Activated CD4-positive, alpha-beta memory T cell treated with anti-CD3 and anti-CD28 coated beads for 36 hours (primary cell): ENCODE measurements at regions of chr17 and their contacts with region 1.

Region 1: DNA sequence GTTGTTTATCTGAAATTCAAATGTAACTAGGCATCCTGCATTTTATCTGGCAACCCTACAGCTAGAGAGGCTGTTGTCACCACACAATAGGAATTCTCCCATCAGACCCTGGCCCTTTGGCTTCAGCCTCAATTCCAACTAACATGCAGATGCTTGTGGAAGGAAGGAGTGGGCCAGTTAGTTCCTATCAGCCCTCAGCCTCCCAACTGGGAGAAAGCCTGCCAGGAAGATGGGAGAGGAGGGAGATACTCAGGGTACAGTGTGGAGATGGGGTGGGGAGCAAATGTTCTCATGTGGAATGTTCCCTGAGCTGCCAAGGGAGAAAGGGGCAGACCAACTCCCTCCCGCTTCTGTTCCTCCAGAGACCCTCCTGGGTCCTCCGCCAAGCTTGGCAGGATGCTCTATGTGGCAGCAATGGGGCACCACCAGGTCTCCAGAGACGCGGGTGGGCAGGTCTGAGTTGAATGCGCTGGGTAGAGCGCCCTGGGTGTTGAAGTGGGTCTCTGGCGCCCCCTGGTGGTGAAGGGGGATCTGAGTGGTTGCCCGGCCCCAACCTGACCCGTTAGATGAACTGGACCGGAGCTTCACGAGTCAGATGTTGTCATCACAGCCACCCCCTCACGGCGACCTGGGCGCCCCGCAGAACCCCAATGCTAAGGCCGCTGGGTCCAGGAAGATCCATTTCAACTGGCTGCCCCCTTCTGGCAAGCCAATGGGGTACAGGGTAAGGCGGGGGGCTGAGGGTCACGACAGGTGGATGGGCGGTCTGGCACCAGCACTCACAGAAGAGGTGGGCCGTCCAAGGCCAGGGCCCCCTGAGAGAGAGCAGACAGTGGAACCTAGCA is 15.2 kb downstream of the GALK1 start:
- DNase-seq: peak; percentile 91
- H3K4me3 Mint-ChIP-seq: peak overlapping the region; percentile 37
- H3K27ac Mint-ChIP-seq: no peak overlapping the region
- H3K4me1 Mint-ChIP-seq: peaks cover 21% of the 10 kb centered on the region
- H3K27me3 Mint-ChIP-seq: no peaks in the 10 kb centered on the region

Region 2: DNA sequence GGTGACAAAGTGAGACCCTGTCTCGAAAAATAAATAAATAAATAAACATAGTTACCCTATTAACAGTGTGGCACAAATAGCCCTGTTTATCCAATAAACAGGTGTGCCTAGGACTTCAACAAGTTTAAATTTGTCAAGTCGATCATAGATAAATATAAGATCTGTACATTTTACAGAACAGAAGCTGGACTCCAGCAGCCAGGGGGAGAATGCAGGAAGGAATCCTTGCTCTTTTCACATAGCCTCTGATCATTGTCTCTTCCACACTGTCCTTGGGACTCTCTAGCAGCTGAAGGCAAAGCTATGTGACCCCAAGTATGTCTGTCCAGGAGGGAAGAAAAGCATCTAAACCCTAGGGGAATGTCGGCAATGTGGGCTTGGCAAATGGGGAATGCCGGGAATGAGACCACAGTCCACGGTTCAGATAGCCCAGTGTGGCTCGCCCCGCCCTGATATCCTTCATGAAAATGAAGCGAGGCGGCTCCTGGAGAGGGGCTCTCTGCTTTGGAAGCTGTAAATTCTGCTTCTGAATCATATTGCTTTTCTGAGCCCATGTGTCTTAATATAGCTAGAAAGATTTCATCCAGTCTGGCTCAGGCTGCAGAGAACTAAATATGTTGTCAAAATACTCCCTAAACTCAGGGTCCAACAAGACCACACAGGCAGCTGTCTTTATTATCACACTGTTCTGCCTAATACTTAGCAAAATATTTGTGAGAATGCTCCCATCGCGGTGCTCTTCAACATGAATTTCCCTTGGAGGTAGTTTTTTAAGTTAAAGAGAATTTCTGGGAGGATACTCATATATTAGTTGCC is 319.4 kb before region 1 on chr17:
- CTCF ChIA-PET with region 1: interaction called, 5 read pairs
- POLR2A ChIA-PET with region 1: no interaction called
- intact Hi-C with region 1: loop called (anchors 5 kb)
- DNase-seq: no peak
- H3K4me3 Mint-ChIP-seq: no peak overlapping the region
- H3K27ac Mint-ChIP-seq: no peak overlapping the region
- H3K4me1 Mint-ChIP-seq: peaks cover 18% of the 10 kb centered on the region
- H3K27me3 Mint-ChIP-seq: no peaks in the 10 kb centered on the region

Region 3: DNA sequence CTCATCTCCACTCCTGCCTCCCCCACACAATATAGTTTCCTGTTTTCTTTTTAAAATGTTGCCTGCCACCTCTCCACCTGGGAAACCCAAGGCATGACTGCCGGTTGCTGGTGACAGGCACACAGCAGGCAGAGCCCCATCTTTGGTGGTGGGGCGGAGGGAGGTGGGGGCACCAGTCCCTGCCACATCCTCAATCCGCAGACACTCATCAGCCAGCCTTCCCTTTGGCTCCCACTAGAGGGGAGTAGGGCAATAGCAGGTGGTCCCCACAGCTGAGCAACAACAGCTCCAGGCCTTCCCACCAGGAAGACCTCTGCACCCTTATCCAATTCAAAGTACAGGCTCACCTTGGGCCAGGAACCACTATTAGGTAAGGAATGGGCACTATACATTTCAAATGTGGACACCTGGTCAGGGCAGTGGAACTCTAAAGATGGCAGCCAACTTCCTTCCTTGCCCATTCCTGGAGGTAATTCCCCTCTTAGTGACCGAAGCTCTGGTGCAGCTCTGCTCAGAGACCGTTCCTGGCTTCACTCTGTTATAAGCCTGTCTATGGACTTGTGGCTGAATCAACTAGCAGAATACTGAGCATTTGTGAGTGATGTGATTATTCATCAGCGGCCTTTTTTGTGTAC is 96.7 kb before region 1 on chr17:
- CTCF ChIA-PET with region 1: interaction called, 40 read pairs
- POLR2A ChIA-PET with region 1: no interaction called
- intact Hi-C with region 1: no loop called
- DNase-seq: peak; percentile 30
- H3K4me3 Mint-ChIP-seq: no peak overlapping the region
- H3K27ac Mint-ChIP-seq: no peak overlapping the region
- H3K4me1 Mint-ChIP-seq: no peaks in the 10 kb centered on the region
- H3K27me3 Mint-ChIP-seq: no peaks in the 10 kb centered on the region

Region 4: GRCh38 chr17:75679706-75680442 is 69.9 kb before region 1 on chr17:
- CTCF ChIA-PET with region 1: interaction called, 151 read pairs
- POLR2A ChIA-PET with region 1: interaction called, 4 read pairs
- intact Hi-C with region 1: loop called (anchors 1 kb)
- DNase-seq: no peak
- H3K4me3 Mint-ChIP-seq: no peak overlapping the region
- H3K27ac Mint-ChIP-seq: no peak overlapping the region
- H3K4me1 Mint-ChIP-seq: peaks cover 20% of the 10 kb centered on the region
- H3K27me3 Mint-ChIP-seq: no peaks in the 10 kb centered on the region

Region 5: GRCh38 chr17:75764711-75765421 is 15.1 kb after region 1 on chr17 and contains the start of gene GALK1:
- CTCF ChIA-PET with region 1: interaction called, 89 read pairs
- POLR2A ChIA-PET with region 1: interaction called, 18 read pairs
- intact Hi-C with region 1: no loop called
- DNase-seq: peak; percentile 83
- H3K4me3 Mint-ChIP-seq: peak within 1 kb of the TSS; percentile 79
- H3K27ac Mint-ChIP-seq: peak within 1 kb of the TSS; percentile 71
- H3K4me1 Mint-ChIP-seq: peaks cover 11% of the 10 kb centered on the region
- H3K27me3 Mint-ChIP-seq: no peaks in the 10 kb centered on the region
- total RNA-seq, gene GALK1: 69.3 to 69.7 TPM

Region 6: GRCh38 chr17:75827252-75828115 is 77.7 kb after region 1 on chr17:
- CTCF ChIA-PET with region 1: interaction called, 39 read pairs
- POLR2A ChIA-PET with region 1: interaction called, 5 read pairs
- intact Hi-C with region 1: no loop called
- DNase-seq: peak; percentile 79
- H3K4me3 Mint-ChIP-seq: peak overlapping the region; percentile 46
- H3K27ac Mint-ChIP-seq: peak overlapping the region; percentile 87
- H3K4me1 Mint-ChIP-seq: peaks cover 15% of the 10 kb centered on the region
- H3K27me3 Mint-ChIP-seq: no peaks in the 10 kb centered on the region

Region 7: DNA sequence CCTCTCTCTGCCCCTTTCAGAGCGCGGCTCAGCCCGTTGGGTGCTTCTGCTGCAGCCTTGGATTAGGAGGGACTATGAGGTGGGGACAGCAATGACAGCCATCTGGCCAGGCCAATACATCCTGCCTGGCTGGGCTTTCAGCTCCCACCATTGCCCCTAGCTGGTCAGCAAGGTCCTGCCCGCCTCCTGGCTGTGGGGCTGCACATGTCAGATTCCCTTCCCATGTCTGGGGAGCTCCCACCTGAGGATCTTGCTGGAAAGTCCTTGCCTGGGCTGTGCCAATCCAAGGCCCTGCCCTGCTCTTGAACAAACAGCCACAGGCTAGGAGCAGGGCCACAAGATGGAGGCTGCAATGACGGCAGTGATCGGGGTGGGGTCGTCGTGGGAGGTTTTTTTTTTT is 138.7 kb after region 1 on chr17:
- CTCF ChIA-PET with region 1: no interaction called
- POLR2A ChIA-PET with region 1: no interaction called
- intact Hi-C with region 1: no loop called
- DNase-seq: no peak
- H3K4me3 Mint-ChIP-seq: no peak overlapping the region
- H3K27ac Mint-ChIP-seq: no peak overlapping the region
- H3K4me1 Mint-ChIP-seq: no peaks in the 10 kb centered on the region
- H3K27me3 Mint-ChIP-seq: no peaks in the 10 kb centered on the region

Region 8: GRCh38 chr17:75970626-75971025 is 220.9 kb after region 1 on chr17:
- CTCF ChIA-PET with region 1: no interaction called
- POLR2A ChIA-PET with region 1: no interaction called
- intact Hi-C with region 1: no loop called
- DNase-seq: no peak
- H3K4me3 Mint-ChIP-seq: no peak overlapping the region
- H3K27ac Mint-ChIP-seq: no peak overlapping the region
- H3K4me1 Mint-ChIP-seq: peaks cover 10% of the 10 kb centered on the region
- H3K27me3 Mint-ChIP-seq: no peaks in the 10 kb centered on the region